IMR-90 (cell line): ENCODE measurements at regions of chr12 and their contacts with region 1.

Region 1: DNA sequence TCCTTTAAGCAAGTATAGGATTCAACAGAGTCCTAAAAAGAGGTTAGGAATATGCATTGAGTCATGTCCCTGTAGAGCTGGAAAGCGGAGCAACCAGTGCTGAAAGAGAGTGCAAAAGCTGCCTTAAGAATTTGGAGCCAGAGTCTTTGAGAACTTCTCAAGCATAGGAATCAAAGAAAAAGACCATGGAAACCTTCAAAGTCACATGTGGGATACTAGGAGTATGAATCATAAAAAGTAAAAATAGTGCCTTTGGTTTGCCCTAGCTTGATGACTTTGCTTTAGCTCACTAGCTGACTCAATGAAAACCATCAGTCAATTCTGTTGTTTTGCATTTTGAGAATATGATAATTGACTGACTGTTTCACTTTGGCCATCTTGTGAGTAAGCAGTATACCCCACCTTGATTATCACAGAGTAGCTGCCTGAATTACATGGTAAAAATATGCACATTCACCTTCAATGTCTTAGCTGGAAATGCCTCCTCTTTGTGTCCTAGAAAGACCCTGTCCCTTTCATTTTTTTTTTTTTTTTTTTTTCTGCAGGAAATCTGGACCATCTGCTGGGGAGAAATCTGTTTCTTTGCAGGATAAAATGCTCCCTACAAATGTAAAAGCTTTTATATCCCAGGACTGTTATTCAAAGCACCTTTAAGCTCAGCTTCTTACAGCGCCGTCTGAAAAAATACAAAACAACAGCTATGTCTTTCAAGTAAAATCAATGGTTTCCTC is 248.6 kb upstream of the KRR1 start:
- DNase-seq: peak; percentile 94
- ATAC-seq: peak; percentile 90
- H3K4me3 ChIP-seq: no peak overlapping the region
- H3K27ac ChIP-seq: peak overlapping the region; percentile 45; the same call in 1 of the 2 replicates
- H3K4me1 ChIP-seq: peaks cover 2% of the 10 kb centered on the region
- H3K27me3 ChIP-seq: no peaks in the 10 kb centered on the region
- CTCF ChIP-seq: no peak
- POLR2A ChIP-seq: no peak
- RAD21 ChIP-seq: no peak; the same call in none of the 2 replicates

Region 2: GRCh38 chr12:75790219-75790618 is 30.2 kb after region 1 on chr12:
- CTCF ChIA-PET with region 1: no interaction called
- POLR2A ChIA-PET with region 1: no interaction called
- dilution Hi-C with region 1: no loop called
- in situ Hi-C with region 1: no loop called
- intact Hi-C with region 1: loop called (anchors 5 kb)
- DNase-seq: peak; percentile 38
- ATAC-seq: peak; percentile 59
- H3K4me3 ChIP-seq: no peak overlapping the region
- H3K27ac ChIP-seq: peak overlapping the region; percentile 57
- H3K4me1 ChIP-seq: peaks cover 4% of the 10 kb centered on the region
- H3K27me3 ChIP-seq: no peaks in the 10 kb centered on the region
- CTCF ChIP-seq: no peak
- POLR2A ChIP-seq: no peak
- RAD21 ChIP-seq: no peak

Region 3: GRCh38 chr12:75877763-75878621 is 118.0 kb after region 1 on chr12:
- CTCF ChIA-PET with region 1: no interaction called
- POLR2A ChIA-PET with region 1: no interaction called
- dilution Hi-C with region 1: no loop called
- in situ Hi-C with region 1: no loop called
- intact Hi-C with region 1: loop called (anchors 10 kb)
- DNase-seq: peak; percentile 93
- ATAC-seq: peak; percentile 60
- H3K4me3 ChIP-seq: no peak overlapping the region
- H3K27ac ChIP-seq: peak overlapping the region; percentile 95
- H3K4me1 ChIP-seq: peaks cover 7% of the 10 kb centered on the region
- H3K27me3 ChIP-seq: no peaks in the 10 kb centered on the region
- CTCF ChIP-seq: no peak
- POLR2A ChIP-seq: no peak
- RAD21 ChIP-seq: 0 out of 2 replicates have a peak, but pooled peaks have one; percentile 7